Mammary epithelial cell (primary cell): ENCODE measurements at regions of chr19 and their contacts with region 1.

Region 1: DNA sequence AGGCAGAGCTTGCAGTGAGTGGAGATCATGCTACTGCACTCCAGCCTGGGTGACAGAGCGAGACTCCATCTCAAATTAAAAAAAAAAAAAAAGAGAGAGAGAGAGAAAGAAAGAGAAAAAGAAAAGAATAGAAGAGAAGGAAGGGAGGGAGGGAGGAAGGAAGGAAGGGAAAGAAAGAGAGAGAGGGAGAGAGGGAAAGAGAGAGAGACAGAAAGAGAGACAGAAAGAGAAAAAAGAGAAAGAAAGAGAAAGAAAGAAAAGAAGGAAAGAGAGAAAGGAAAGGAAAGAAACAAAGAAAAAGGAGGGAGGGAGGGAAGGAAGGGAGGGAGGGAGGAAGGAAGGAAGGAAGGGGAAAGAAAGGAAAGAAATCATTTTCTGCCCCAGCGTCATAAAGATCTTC is 7.0 kb upstream of the UNC13A start:
- DNase-seq: no peak
- H3K4me3 ChIP-seq: no peak overlapping the region
- H3K27ac ChIP-seq: no peak overlapping the region
- H3K4me1 ChIP-seq: no peaks in the 10 kb centered on the region
- H3K27me3 ChIP-seq: no peaks in the 10 kb centered on the region
- CTCF ChIP-seq: no peak

Region 2: GRCh38 chr19:17599780-17600179 is 95.4 kb before region 1 on chr19:
- CTCF ChIA-PET with region 1: no interaction called
- dilution Hi-C with region 1: loop called (anchors 5 kb)
- in situ Hi-C with region 1: no loop called
- intact Hi-C with region 1: no loop called
- DNase-seq: no peak
- H3K4me3 ChIP-seq: no peak overlapping the region
- H3K27ac ChIP-seq: no peak overlapping the region
- H3K4me1 ChIP-seq: no peaks in the 10 kb centered on the region
- H3K27me3 ChIP-seq: peaks cover 4% of the 10 kb centered on the region
- CTCF ChIP-seq: no peak

Region 3: DNA sequence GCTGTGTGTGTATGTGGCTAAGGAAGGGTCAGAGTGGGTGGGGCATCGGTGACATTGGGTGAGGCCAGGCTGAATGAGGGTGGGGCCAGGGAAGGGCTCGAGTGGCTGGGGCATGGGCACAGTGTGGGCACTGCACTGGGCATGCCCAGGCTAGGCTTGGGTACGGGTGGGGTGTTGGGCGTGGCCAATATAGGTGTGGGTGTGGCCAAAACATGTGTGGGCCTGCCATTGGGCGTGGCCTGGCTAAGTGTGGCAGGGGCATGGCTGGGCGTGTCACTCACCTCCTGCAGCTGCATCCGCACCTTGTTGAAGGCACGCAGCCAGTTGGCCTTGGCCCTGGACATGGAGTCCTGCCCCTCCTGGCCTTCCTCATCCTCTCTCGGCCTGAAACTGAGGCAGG is 40.2 kb before region 1 on chr19:
- CTCF ChIA-PET with region 1: no interaction called
- dilution Hi-C with region 1: loop called (anchors 5 kb)
- in situ Hi-C with region 1: no loop called
- intact Hi-C with region 1: no loop called
- DNase-seq: no peak
- H3K4me3 ChIP-seq: no peak overlapping the region
- H3K27ac ChIP-seq: no peak overlapping the region
- H3K4me1 ChIP-seq: peaks cover 5% of the 10 kb centered on the region
- H3K27me3 ChIP-seq: no peaks in the 10 kb centered on the region
- CTCF ChIP-seq: no peak

Region 4: GRCh38 chr19:17747205-17748098 is 52.3 kb after region 1 on chr19:
- CTCF ChIA-PET with region 1: no interaction called
- dilution Hi-C with region 1: loop called (anchors 5 kb)
- in situ Hi-C with region 1: no loop called
- intact Hi-C with region 1: no loop called
- DNase-seq: peak; percentile 87
- H3K4me3 ChIP-seq: peak overlapping the region; percentile 33 to 42 (median 37)
- H3K27ac ChIP-seq: no peak overlapping the region
- H3K4me1 ChIP-seq: no peaks in the 10 kb centered on the region
- H3K27me3 ChIP-seq: no peaks in the 10 kb centered on the region
- CTCF ChIP-seq: no peak